ENCODE measurements at regions of chr13 and their contacts with region 1.

Region 1: DNA sequence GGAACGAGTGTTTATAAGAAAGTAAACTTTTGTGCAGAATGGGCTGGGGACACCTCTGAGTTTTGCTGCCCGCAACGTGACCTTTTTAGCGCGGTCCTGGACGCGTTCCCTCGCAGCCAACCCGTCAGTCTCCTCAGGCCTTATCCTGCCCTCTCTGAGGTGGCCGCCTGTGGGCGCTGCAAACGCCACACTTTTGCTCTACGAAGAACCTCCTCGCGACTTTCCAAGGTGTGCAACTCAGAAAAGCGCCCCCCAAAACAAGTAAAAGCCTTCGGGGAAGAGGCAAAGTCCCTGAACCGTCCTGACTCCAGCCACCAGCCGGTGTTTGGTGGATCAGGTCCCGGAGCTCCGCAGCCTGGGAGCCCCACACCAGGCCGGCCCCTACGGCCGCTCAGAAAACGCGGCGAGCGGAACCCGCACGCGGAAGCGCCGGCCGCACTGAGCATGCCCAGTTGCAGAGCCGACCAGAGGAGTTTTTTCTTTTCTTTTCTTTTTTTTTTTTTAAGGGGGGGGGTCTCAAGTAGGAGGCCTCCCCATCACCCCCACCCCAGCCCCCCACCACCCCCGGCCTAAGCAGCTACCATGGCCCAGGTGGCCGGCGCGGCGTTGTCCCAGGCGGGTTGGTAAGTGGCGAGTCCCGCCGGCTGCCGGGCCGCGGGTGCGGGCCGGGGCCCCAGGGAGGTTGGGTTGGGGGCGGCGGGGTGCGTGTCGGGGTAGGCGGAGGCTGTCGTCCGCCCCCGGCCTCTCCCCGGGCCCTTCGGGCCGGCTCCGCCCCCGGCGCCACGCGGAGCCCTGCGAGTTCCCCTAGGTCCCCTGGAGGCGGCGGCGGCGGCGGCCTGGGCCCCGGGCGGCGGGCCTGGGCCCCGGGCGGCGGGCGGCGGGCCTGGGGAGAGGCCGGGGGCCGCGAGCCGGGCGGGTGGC is at the start of gene TDRD3:
- DNase-seq: peak; percentile 91 to 94
- ATAC-seq: peak; percentile 94
- H3K4me3 ChIP-seq: peak within 1 kb of the TSS; percentile 97 to 99
- H3K27ac ChIP-seq: peak within 1 kb of the TSS; percentile 92 to 99
- H3K4me1 ChIP-seq: peaks cover 0 to 5% of the 10 kb centered on the region in 2 donors
- H3K27me3 ChIP-seq: no peaks in the 10 kb centered on the region
- total RNA-seq, gene TDRD3: 31.0 to 44.3 TPM

Region 2: DNA sequence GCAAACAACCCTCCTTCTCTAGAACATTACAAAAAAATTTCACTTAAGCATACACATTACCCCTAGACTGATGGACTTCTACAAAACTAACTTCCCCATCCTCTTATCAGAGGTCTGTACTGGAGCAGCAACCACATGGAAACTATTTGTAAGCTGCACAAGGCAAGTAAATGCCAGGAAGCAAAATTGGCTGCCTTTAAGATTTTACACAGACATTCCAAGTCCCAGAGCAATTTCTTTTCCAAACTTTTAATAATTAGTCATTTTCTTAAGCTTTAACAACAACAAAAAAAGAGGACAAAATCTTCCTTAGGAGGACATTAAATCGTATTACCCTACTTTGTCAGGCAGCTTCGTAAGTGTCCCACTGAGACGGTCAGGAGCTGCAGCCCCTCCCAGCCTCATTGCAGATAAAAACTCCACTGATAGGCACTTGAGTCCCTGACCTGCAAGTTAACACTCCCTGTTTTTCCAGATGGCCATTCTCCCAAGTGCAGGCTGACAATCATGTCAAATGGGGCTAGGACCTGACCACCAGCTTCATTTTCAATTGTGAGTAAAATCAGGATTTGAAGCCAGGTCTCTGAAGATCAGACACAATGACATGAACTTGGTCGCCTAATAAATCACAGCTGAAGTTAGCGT is 913.4 kb before region 1 on chr13:
- intact Hi-C with region 1: no loop called
- DNase-seq: no peak
- ATAC-seq: peak; percentile 69
- H3K4me3 ChIP-seq: no peak overlapping the region
- H3K27ac ChIP-seq: no peak overlapping the region
- H3K4me1 ChIP-seq: peaks cover 0 to 4% of the 10 kb centered on the region in 2 donors
- H3K27me3 ChIP-seq: no peaks in the 10 kb centered on the region

Region 3: DNA sequence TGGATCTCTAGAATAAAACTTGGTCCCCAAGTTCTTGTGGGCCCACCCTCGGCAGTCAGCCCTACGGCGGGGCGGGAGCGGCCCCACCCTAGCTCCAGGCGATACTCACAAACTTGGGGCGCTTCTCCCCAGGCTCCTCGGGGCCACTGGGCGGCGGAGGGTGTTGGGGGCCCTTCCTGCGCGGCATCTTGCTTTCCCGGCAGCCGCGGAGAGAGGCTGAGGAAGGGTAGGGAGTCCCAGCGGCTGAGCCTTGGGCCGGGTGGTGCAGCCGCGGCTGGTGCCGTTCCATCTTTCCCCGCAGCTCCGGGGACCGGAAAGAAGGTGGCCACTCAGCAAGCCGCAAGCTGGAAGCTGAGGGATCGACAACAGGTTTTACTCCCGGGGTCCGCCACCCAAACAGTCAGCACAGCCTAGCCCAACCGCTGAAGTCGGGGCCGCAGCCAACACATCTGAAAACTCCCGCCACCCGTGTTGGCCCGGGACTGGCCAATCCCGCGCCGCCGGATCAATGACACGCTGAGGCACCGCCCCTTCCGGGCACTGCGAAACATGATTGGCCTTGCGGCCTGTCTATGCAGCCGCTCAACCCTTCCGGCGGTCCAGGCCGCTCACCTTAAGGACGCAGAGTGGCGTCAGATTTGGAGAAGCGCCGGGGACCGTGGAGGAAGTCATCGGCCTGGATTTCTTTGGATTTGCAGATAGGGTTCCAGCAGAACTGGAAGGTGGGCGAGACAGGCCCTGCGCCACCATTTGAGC is 233.4 kb before region 1 on chr13 and contains the start of gene DIAPH3:
- intact Hi-C with region 1: loop called (anchors 1 to 5 kb)
- DNase-seq: peak; percentile 97 to 98
- ATAC-seq: peak; percentile 100
- H3K4me3 ChIP-seq: peak within 1 kb of the TSS; percentile 51 to 85
- H3K27ac ChIP-seq: peak within 1 kb of the TSS; percentile 74 to 93
- H3K4me1 ChIP-seq: peaks cover 4% of the 10 kb centered on the region in 2 donors
- H3K27me3 ChIP-seq: no peaks in the 10 kb centered on the region
- total RNA-seq, gene DIAPH3: 3.2 to 7.5 TPM

Region 4: DNA sequence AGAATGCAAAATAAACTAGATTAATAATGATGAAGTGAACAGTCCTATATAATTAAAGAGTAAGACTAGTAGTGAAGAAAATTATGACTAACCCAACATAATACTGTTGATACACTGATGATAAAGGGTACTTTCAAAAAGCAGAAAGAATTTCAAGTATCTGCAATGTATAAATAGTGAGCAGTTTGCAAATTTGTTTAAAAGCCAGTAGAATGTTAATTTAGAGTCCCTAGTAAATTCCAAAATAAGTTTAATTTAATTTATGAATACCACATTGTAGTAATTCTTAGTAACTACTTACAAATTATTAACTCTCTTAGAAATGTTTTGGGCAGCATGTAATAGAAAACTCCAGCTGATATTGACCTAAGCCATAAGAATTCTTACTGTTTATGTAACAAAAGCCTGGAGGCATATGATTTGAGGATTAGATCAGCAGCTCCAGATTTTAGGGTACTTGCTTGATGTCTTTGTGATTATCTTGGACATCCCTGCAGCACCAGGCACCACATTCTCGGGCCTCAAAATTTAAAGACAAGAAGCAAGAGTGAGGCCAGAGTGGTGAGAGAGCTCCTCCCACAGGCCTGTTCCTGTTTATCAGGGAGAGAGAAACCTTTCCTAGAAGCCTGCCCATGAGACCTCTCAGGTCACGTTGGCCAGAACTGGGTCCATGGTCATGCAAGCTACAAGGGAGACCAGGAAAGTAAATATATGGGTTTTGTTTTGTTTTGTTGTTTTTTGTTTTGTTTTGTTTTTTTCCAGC is 67.6 kb before region 1 on chr13:
- intact Hi-C with region 1: no loop called
- DNase-seq: no peak
- ATAC-seq: no peak
- H3K4me3 ChIP-seq: no peak overlapping the region
- H3K27ac ChIP-seq: no peak overlapping the region
- H3K4me1 ChIP-seq: no peaks in the 10 kb centered on the region
- H3K27me3 ChIP-seq: no peaks in the 10 kb centered on the region

Region 5: DNA sequence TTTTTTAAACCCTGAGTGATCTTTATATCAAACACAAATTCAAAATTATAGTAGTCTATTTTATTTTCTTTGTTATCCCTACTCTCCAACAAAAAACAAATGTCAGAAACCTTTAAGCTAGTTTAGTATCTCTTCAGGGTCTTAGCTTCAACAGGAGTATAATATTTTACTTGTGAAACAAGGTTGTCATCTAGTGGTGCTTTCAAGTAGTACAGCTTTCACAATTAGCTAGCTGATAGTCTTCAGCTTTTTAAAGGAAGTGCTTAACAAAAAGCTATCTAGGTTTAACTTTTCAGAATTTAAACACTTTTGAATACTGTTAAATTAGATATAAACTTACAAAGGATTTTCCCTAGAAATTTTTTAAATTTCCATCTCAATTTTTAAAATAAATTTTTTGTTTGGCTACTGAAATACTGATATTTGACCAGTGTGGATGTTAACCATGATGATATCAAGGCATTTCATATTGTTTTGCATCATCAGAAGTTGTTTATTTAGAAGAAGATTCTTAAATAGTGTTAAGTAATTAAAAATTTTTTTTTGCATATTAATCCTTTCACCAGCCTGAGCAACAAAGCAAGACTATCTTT is 34.2 kb after region 1 on chr13:
- intact Hi-C with region 1: loop called in 1 of 2 experiments (anchors 5 kb)
- DNase-seq: no peak
- ATAC-seq: peak; percentile 78
- H3K4me3 ChIP-seq: no peak overlapping the region
- H3K27ac ChIP-seq: no peak overlapping the region
- H3K4me1 ChIP-seq: no peaks in the 10 kb centered on the region
- H3K27me3 ChIP-seq: no peaks in the 10 kb centered on the region

Region 6: GRCh38 chr13:60661521-60661920 is 264.5 kb after region 1 on chr13:
- intact Hi-C with region 1: no loop called
- DNase-seq: no peak
- ATAC-seq: no peak
- H3K4me3 ChIP-seq: no peak overlapping the region
- H3K27ac ChIP-seq: no peak overlapping the region
- H3K4me1 ChIP-seq: no peaks in the 10 kb centered on the region
- H3K27me3 ChIP-seq: no peaks in the 10 kb centered on the region

Region 7: DNA sequence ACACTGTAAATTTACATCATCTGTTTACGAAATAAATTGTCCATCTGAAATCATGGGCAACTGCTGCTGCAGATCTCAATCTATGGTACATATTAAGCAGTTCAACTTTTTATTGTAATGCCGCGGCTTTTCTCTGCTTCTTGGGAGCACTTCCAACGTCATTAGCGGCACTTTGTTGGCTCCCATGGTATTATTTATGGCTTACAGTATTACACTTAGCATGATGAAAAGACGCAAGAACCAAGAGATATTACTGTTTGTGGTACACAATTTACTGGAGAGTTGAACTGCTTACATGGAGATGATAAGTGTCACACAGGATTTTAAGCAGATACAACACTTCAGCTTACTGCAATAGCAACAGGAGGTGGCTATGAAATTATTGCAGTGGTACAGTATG is 576.5 kb after region 1 on chr13:
- intact Hi-C with region 1: no loop called
- DNase-seq: no peak
- ATAC-seq: no peak
- H3K4me3 ChIP-seq: no peak overlapping the region
- H3K27ac ChIP-seq: no peak overlapping the region
- H3K4me1 ChIP-seq: no peaks in the 10 kb centered on the region
- H3K27me3 ChIP-seq: no peaks in the 10 kb centered on the region

Measured in aorta (tissue), 5 donors.